Calu3 (cell line): ENCODE measurements at regions of chr1 and their contacts with region 1.

Region 1: DNA sequence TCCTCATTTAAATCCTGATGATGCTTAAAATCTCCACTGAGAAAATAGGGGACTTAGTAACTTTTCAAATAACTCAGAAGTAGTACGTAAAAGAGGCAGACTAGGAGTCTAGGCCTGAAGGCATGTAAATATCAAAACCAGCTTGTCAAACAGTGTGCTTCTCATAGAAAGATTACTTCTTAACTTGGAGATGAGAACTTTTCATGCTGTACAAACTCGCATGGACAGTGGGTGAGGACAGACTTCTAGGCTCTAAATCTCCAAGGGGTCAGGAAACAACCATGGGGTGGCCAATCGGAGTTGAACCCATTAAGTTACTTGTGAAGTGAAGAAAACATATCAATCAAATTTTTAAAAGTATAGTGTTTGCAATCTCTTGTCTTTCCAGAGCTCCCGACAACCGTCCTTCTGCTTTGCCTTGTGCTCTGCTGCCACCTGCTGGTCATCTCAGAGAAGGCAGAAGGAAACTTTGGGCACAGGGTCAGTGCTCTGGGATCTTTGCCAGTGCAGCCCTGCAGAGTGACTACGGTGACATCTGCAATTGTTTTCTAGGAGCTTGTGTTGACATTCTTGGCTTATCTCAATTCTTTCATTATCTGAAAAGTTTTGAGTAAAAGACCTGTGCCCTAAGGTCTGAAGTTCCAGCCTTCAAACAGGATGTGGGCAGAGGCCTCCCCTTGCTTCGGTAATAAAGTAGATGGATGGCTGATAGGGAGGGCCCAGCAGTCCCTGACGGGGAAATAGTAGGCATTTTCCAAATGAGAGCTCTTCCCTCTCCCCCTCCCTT is 105.1 kb upstream of the PDE4B start:
- DNase-seq: peak; percentile 90
- H3K4me3 Mint-ChIP-seq: no peak overlapping the region
- H3K27ac Mint-ChIP-seq: no peak overlapping the region
- H3K4me1 Mint-ChIP-seq: no peaks in the 10 kb centered on the region
- H3K27me3 Mint-ChIP-seq: peaks cover 25% of the 10 kb centered on the region
- CTCF ChIP-seq: peak; percentile 95

Region 2: GRCh38 chr1:65459397-65459768 is 228.2 kb before region 1 on chr1:
- CTCF ChIA-PET with region 1: interaction called, 10 read pairs
- intact Hi-C with region 1: no loop called
- DNase-seq: peak; percentile 9
- H3K4me3 Mint-ChIP-seq: no peak overlapping the region
- H3K27ac Mint-ChIP-seq: no peak overlapping the region
- H3K4me1 Mint-ChIP-seq: peaks cover 7% of the 10 kb centered on the region
- H3K27me3 Mint-ChIP-seq: no peaks in the 10 kb centered on the region
- CTCF ChIP-seq: no peak

Region 3: GRCh38 chr1:65904681-65905083 is 217.1 kb after region 1 on chr1:
- CTCF ChIA-PET with region 1: no interaction called
- intact Hi-C with region 1: no loop called
- DNase-seq: no peak
- H3K4me3 Mint-ChIP-seq: no peak overlapping the region
- H3K27ac Mint-ChIP-seq: no peak overlapping the region
- H3K4me1 Mint-ChIP-seq: no peaks in the 10 kb centered on the region
- H3K27me3 Mint-ChIP-seq: no peaks in the 10 kb centered on the region
- CTCF ChIP-seq: no peak